ENCODE measurements at regions of chr3 and their contacts with region 1.

Region 1: GRCh38 chr3:50568947-50569749 is at the start of gene HEMK1:
- DNase-seq: peak; percentile 84 to 97 (median 91)
- ATAC-seq: peak; percentile 64
- H3K4me3 ChIP-seq: peak within 1 kb of the TSS; percentile 77
- H3K4me3 Mint-ChIP-seq: peak within 1 kb of the TSS; percentile 97
- H3K27ac ChIP-seq: peak within 1 kb of the TSS; percentile 80 to 83
- H3K27ac Mint-ChIP-seq: peak within 1 kb of the TSS; percentile 89
- H3K4me1 ChIP-seq: peaks cover 79% of the 10 kb centered on the region
- H3K4me1 Mint-ChIP-seq: peaks cover 78% of the 10 kb centered on the region
- H3K27me3 ChIP-seq: no peaks in the 10 kb centered on the region
- H3K27me3 Mint-ChIP-seq: no peaks in the 10 kb centered on the region
- CTCF ChIP-seq: no peak
- total RNA-seq, gene HEMK1: 12.4 to 14.6 TPM

Region 2: GRCh38 chr3:50350527-50351322 is 218.4 kb before region 1 on chr3 and contains the starts of genes CYB561D2 and NPRL2:
- CTCF ChIA-PET with region 1: interaction called, 4 read pairs
- POLR2A ChIA-PET with region 1: interaction called, 10 read pairs
- intact Hi-C with region 1: no loop called
- DNase-seq: peak; percentile 98 to 100 (median 99)
- ATAC-seq: peak; percentile 85
- H3K4me3 ChIP-seq: peak within 1 kb of the TSS; percentile 76
- H3K4me3 Mint-ChIP-seq: peak within 1 kb of the TSS; percentile 97
- H3K27ac ChIP-seq: peak within 1 kb of the TSS; percentile 94 to 97
- H3K27ac Mint-ChIP-seq: peak within 1 kb of the TSS; percentile 99
- H3K4me1 ChIP-seq: peaks cover 73% of the 10 kb centered on the region
- H3K4me1 Mint-ChIP-seq: peaks cover 64% of the 10 kb centered on the region
- H3K27me3 ChIP-seq: no peaks in the 10 kb centered on the region
- H3K27me3 Mint-ChIP-seq: no peaks in the 10 kb centered on the region
- CTCF ChIP-seq: no peak
- total RNA-seq, gene CYB561D2: 19.8 TPM
- total RNA-seq, gene NPRL2: 29.4 to 33.2 TPM

Region 3: DNA sequence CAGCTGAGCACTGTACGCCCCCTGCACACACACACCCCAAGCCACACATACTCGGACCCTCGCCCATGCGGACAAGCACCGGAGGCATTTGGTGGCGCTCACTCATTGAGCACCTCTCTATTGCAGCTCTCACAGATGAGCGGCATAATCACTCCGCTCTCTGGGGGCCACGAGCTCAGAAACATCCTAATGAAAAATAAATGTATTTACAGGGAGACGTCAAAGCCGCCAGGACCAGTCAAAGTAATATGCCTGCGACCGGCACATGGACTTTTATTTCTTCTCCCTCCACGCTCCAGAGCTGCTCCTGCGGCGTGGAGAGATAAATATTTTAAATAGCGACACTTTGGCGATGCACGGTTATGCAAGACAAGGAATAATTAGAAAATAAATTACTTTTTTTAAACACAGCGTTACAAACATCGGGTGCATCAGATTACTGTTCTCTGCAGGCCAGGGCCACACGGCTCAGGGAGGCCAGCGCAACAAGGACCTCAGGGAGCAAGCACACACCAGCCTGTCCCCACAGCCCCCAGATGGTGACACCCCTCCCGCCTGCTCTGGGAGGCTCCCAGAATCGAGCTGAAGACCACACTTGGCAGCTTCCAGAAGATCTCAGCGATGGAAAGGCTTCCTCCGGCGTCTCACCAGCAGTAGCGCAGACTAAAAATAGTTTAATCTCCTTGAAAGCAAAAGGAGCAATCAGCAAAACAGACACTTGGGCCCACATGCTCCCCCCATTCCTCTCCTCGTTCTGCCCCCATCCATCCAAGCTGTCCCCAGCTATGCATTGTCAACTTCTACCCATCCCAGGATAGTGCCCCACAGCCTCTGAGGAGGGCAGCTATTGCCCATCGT is 113.8 kb before region 1 on chr3:
- CTCF ChIA-PET with region 1: no interaction called
- POLR2A ChIA-PET with region 1: no interaction called
- intact Hi-C with region 1: no loop called
- DNase-seq: no peak
- ATAC-seq: no peak
- H3K4me3 ChIP-seq: no peak overlapping the region
- H3K4me3 Mint-ChIP-seq: no peak overlapping the region
- H3K27ac ChIP-seq: no peak overlapping the region
- H3K27ac Mint-ChIP-seq: no peak overlapping the region
- H3K4me1 ChIP-seq: peaks cover 16% of the 10 kb centered on the region
- H3K4me1 Mint-ChIP-seq: peaks cover 5% of the 10 kb centered on the region
- H3K27me3 ChIP-seq: no peaks in the 10 kb centered on the region
- H3K27me3 Mint-ChIP-seq: no peaks in the 10 kb centered on the region
- CTCF ChIP-seq: no peak

Region 4: GRCh38 chr3:50519471-50520089 is 49.6 kb before region 1 on chr3:
- CTCF ChIA-PET with region 1: no interaction called
- POLR2A ChIA-PET with region 1: no interaction called
- intact Hi-C with region 1: loop called in 1 of 2 experiments (anchors 5 kb)
- DNase-seq: peak; percentile 56 to 82 (median 64)
- ATAC-seq: peak; percentile 93
- H3K4me3 ChIP-seq: no peak overlapping the region
- H3K4me3 Mint-ChIP-seq: no peak overlapping the region
- H3K27ac ChIP-seq: no peak overlapping the region
- H3K27ac Mint-ChIP-seq: no peak overlapping the region
- H3K4me1 ChIP-seq: peaks cover 12% of the 10 kb centered on the region
- H3K4me1 Mint-ChIP-seq: peaks cover 5% of the 10 kb centered on the region
- H3K27me3 ChIP-seq: no peaks in the 10 kb centered on the region
- H3K27me3 Mint-ChIP-seq: no peaks in the 10 kb centered on the region
- CTCF ChIP-seq: peak; percentile 85

Region 5: DNA sequence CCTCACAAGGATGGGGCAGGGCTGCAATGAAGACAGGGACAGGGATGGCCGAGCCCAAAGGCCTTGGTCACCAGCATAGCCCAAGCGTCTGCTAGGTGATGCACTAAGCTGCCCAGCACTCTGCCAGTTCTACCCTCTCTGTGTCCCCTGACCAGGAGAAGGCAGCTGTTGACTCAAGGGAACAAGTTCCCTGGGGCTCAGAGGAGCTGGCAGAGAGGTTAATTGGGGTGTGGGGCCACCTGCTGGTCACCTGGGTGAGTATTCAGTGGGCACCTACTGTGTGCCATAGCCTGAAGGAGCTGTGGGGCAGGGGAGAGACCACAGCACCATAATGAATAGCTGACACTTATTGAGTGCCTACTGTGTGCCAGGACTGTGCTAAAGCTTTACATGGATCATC is 83.6 kb after region 1 on chr3:
- CTCF ChIA-PET with region 1: interaction called, 4 read pairs
- POLR2A ChIA-PET with region 1: interaction called, 12 read pairs
- intact Hi-C with region 1: loop called in 1 of 2 experiments (anchors 1 kb)
- DNase-seq: peak; percentile 20 to 74 (median 50)
- ATAC-seq: peak; percentile 64
- H3K4me3 ChIP-seq: no peak overlapping the region
- H3K4me3 Mint-ChIP-seq: no peak overlapping the region
- H3K27ac ChIP-seq: no peak overlapping the region
- H3K27ac Mint-ChIP-seq: peak overlapping the region; percentile 2
- H3K4me1 ChIP-seq: peaks cover 6% of the 10 kb centered on the region
- H3K4me1 Mint-ChIP-seq: peaks cover 7% of the 10 kb centered on the region
- H3K27me3 ChIP-seq: no peaks in the 10 kb centered on the region
- H3K27me3 Mint-ChIP-seq: no peaks in the 10 kb centered on the region
- CTCF ChIP-seq: peak; percentile 69

Region 6: GRCh38 chr3:51384726-51385473 is 815.8 kb after region 1 on chr3 and contains the start of gene MANF:
- CTCF ChIA-PET with region 1: no interaction called
- POLR2A ChIA-PET with region 1: interaction called, 27 read pairs
- intact Hi-C with region 1: loop called (anchors 2 to 5 kb)
- DNase-seq: peak; percentile 93 to 99 (median 95)
- ATAC-seq: peak; percentile 95
- H3K4me3 ChIP-seq: peak within 1 kb of the TSS; percentile 99
- H3K4me3 Mint-ChIP-seq: peak within 1 kb of the TSS; percentile 99
- H3K27ac ChIP-seq: peak within 1 kb of the TSS; percentile 84 to 96
- H3K27ac Mint-ChIP-seq: peak within 1 kb of the TSS; percentile 99
- H3K4me1 ChIP-seq: peaks cover 47% of the 10 kb centered on the region
- H3K4me1 Mint-ChIP-seq: peaks cover 55% of the 10 kb centered on the region
- H3K27me3 ChIP-seq: no peaks in the 10 kb centered on the region
- H3K27me3 Mint-ChIP-seq: no peaks in the 10 kb centered on the region
- CTCF ChIP-seq: no peak
- total RNA-seq, gene MANF: 26.4 to 30.2 TPM

Region 7: DNA sequence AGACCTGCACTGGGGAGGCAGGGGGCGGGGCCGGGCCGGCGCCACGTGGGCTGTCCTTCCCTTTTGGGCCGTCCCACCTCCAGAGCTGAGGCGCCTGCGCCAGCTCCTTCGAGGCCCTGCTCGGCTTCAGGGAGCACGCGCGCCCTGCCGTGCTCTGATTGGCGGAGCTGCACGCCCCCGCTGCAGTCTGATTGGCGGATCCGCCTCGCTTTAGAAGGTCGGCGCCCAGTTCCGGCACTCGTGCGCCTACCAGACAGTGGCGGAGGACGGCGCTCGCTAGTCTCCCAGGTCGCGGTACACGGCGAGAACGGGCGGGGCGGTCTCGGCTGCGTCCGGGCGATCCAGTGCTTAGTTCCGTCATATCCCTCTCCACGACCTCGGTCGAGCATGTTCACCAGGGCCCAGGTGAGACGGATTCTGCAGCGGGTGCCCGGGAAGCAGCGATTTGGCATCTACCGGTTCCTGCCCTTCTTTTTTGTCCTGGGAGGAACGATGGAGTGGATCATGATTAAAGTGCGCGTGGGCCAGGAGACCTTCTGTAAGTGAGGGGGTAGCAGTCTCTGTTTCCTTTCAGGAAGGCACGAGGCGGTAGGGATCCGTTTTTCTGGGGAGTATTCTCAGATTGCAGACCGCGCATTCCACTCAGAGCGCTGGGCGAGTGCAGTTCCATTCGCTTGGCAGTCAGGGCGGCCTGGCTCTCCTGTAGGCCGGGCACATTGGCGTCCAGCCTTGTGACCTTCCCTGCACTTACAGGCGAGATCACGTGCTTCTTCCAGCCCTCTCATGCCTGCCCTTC is 1967.4 kb after region 1 on chr3 and contains the start of gene UQCC5:
- CTCF ChIA-PET with region 1: no interaction called
- POLR2A ChIA-PET with region 1: no interaction called
- intact Hi-C with region 1: loop called in 1 of 2 experiments (anchors 10 kb)
- DNase-seq: peak; percentile 93 to 99 (median 96)
- ATAC-seq: peak; percentile 89
- H3K4me3 ChIP-seq: peak within 1 kb of the TSS; percentile 92
- H3K4me3 Mint-ChIP-seq: peak within 1 kb of the TSS; percentile 99
- H3K27ac ChIP-seq: peak within 1 kb of the TSS; percentile 71 to 83
- H3K27ac Mint-ChIP-seq: peak within 1 kb of the TSS; percentile 95
- H3K4me1 ChIP-seq: peaks cover 64% of the 10 kb centered on the region
- H3K4me1 Mint-ChIP-seq: peaks cover 60% of the 10 kb centered on the region
- H3K27me3 ChIP-seq: peaks cover 0 to 3% of the 10 kb centered on the region in 2 experiments
- H3K27me3 Mint-ChIP-seq: no peaks in the 10 kb centered on the region
- CTCF ChIP-seq: peak; percentile 22
- total RNA-seq, gene UQCC5: 2.8 to 8.3 TPM